Naive thymus-derived CD8-positive, alpha-beta T cell (primary cell): ENCODE measurements at regions of chr19 and their contacts with region 1.

Region 1: GRCh38 chr19:5827891-5828660 is 11.4 kb downstream of the FUT6 start:
- DNase-seq: peak; percentile 87 to 97 (median 94)
- ATAC-seq: peak; percentile 81 to 84
- H3K4me3 Mint-ChIP-seq: peak overlapping the region; percentile 93 to 100 (median 97)
- H3K27ac Mint-ChIP-seq: peak overlapping the region; percentile 94 to 100 (median 98)
- H3K4me1 Mint-ChIP-seq: peaks cover 10 to 22% (median 19%) of the 10 kb centered on the region in 4 donors
- H3K27me3 Mint-ChIP-seq: no peaks in the 10 kb centered on the region

Region 2: GRCh38 chr19:5803752-5804515 is 24.1 kb before region 1 on chr19:
- POLR2A ChIA-PET with region 1: interaction called, 23 read pairs
- DNase-seq: peak; percentile 85 to 98 (median 93)
- ATAC-seq: peak; percentile 94 to 96
- H3K4me3 Mint-ChIP-seq: peak overlapping the region; percentile 70 to 86 (median 79)
- H3K27ac Mint-ChIP-seq: peak overlapping the region in 8 of 10 donors; percentile 55 to 91 (median 80)
- H3K4me1 Mint-ChIP-seq: peaks cover 14 to 27% (median 25%) of the 10 kb centered on the region in 4 donors
- H3K27me3 Mint-ChIP-seq: peaks cover 6 to 18% (median 14%) of the 10 kb centered on the region in 5 donors

Region 3: DNA sequence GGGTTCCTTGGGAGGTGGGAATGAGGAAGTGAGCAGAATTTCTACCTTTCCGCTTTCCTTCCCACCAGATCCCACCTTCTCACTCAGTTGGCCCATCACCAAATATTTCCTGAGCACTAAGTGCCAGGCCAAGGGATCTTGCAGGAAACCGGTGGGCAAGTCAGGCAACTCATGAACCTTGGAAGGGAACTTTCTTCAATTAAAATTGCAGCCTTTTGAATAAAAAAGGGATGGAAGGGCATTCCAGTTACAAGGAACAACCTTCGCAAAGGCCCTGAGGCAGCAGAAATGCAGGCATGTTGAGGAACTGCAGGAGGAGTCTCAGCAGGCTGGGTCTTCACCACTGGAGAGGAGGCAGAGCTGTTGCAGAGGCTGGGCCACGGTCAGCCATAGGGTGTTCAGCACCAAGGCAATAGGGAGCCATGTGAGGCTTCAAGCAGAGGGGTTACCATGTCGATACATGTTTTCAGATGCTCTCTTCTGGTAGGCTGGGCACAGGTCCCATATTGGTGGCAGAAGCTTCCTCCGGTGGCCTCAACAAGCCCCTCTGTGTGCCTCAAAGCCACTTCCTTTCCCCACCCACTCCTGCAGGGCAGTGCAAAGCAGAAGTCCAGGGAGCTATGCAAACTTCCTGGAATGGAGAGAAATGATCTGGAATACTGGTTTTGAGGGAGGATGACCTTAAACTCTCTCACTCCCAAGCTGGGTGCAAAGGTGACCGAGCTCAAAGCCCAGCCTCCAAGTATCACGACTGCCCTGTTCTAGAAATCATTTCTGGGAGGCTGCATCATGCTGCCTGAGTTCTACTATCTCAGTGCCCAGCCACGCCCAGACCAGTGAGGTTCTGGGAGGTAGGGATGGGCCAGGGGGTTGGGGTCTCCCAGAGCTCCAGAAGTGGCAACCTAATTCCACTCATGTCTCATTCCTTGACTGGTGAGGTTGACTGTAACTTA is 11.3 kb after region 1 on chr19 and contains the start of gene FUT6:
- POLR2A ChIA-PET with region 1: interaction called, 13 read pairs
- DNase-seq: no peak
- ATAC-seq: no peak
- H3K4me3 Mint-ChIP-seq: peak within 1 kb of the TSS in 2 of 10 donors; percentile 19 to 45
- H3K27ac Mint-ChIP-seq: peak within 1 kb of the TSS in 1 of 10 donors; percentile 83
- H3K4me1 Mint-ChIP-seq: peaks cover 4 to 21% (median 14%) of the 10 kb centered on the region in 4 donors
- H3K27me3 Mint-ChIP-seq: peaks cover 0 to 13% (median 0%) of the 10 kb centered on the region in 5 donors
- polyA plus RNA-seq, gene FUT6: not detected

Region 4: DNA sequence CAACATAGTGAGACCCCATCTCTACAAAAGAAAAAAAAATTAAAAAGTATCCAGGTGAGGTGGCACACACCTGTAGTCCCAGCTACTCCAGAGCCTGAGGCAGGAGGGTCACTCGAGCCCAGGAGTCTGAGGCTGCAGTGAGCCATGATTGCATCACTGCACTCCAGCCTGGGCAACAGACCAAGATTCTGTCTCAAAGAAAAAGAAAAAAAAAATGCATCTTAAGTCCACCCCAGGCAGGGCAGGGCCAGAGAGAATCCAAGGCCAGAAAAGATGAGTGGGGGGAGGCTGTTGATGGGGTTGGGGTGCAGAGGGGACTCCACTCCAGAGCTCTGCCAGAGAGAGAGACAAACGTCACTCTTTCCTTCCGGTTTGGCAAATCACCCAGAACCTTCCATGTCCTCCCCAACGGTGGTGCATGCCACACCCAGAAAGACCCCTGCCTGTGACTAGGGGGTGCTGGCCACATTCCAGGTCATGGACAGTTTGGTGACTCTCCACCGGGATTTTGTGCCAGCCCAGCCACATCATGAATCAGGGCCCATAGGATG is 22.7 kb after region 1 on chr19:
- POLR2A ChIA-PET with region 1: no interaction called
- DNase-seq: no peak
- ATAC-seq: no peak
- H3K4me3 Mint-ChIP-seq: no peak overlapping the region
- H3K27ac Mint-ChIP-seq: peak overlapping the region in 2 of 10 donors; percentile 14 to 24
- H3K4me1 Mint-ChIP-seq: peaks cover 0 to 7% (median 5%) of the 10 kb centered on the region in 4 donors
- H3K27me3 Mint-ChIP-seq: no peaks in the 10 kb centered on the region

Region 5: DNA sequence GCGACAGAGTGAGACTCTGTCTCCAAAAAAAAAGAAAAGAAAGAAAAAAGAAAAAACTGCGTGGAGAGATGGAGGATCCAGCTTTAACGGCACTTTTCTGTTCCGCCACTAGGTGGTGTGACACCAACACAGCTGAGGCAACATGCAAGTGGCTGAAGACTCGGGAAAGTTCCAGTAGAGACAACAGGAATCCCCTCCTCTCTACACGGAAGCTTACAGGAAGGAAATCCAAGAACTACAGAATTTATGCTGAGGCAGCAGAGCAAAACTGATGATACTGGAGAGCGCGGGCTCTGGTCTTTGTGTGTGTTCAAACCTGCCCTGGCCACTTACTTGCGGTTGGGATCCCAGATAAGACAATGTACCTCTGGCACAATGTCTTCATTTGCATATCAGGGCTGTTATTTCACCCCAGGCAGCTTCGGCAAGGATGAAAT is 139.9 kb after region 1 on chr19:
- POLR2A ChIA-PET with region 1: interaction called, 10 read pairs
- DNase-seq: peak; percentile 39 to 72 (median 56)
- ATAC-seq: peak; percentile 73 to 78
- H3K4me3 Mint-ChIP-seq: peak overlapping the region; percentile 2 to 74 (median 64)
- H3K27ac Mint-ChIP-seq: peak overlapping the region; percentile 72 to 94 (median 84)
- H3K4me1 Mint-ChIP-seq: peaks cover 45 to 97% (median 93%) of the 10 kb centered on the region in 4 donors
- H3K27me3 Mint-ChIP-seq: no peaks in the 10 kb centered on the region

Region 6: GRCh38 chr19:6021878-6022569 is 193.9 kb after region 1 on chr19:
- POLR2A ChIA-PET with region 1: interaction called, 10 read pairs
- DNase-seq: peak; percentile 66 to 91 (median 76)
- ATAC-seq: peak; percentile 98 to 99
- H3K4me3 Mint-ChIP-seq: no peak overlapping the region
- H3K27ac Mint-ChIP-seq: peak overlapping the region in 1 of 10 donors; percentile 55
- H3K4me1 Mint-ChIP-seq: peaks cover 5 to 25% (median 8%) of the 10 kb centered on the region in 4 donors
- H3K27me3 Mint-ChIP-seq: peaks cover 0 to 4% (median 0%) of the 10 kb centered on the region in 5 donors